Activated naive CD4-positive, alpha-beta T cell treated with anti-CD3 and anti-CD28 coated beads for 36 hours (primary cell): ENCODE measurements at regions of chr1 and their contacts with region 1.

Region 1: DNA sequence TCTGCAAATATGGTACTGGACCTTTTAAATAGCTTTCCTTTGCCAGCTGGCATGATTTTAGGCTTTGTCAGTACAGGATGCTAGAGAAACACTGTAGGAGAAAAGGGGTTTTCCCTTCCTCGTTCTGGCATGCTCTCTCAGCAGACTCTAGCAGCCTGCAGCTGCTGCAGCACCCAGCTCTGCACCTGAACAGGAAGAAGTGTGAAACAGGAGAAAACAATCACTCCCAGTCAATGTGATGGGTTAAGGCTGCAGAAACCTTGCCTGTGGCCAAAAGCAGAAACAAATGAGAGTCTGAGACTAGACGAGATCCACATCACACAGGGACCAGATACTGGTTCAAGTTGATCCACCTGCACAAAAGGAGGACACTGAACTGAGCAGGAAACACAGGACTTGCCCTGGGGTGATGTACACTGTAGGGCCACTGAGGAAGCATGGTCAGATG is 21.2 kb downstream of the OVGP1 start:
- DNase-seq: peak; percentile 70
- H3K4me3 Mint-ChIP-seq: no peak overlapping the region
- H3K27ac Mint-ChIP-seq: no peak overlapping the region
- H3K4me1 Mint-ChIP-seq: peaks cover 28% of the 10 kb centered on the region
- H3K27me3 Mint-ChIP-seq: no peaks in the 10 kb centered on the region

Region 2: GRCh38 chr1:110581682-110582145 is 824.6 kb before region 1 on chr1:
- CTCF ChIA-PET with region 1: no interaction called
- intact Hi-C with region 1: no loop called
- DNase-seq: no peak
- H3K4me3 Mint-ChIP-seq: no peak overlapping the region
- H3K27ac Mint-ChIP-seq: no peak overlapping the region
- H3K4me1 Mint-ChIP-seq: no peaks in the 10 kb centered on the region
- H3K27me3 Mint-ChIP-seq: peaks cover 4% of the 10 kb centered on the region

Region 3: DNA sequence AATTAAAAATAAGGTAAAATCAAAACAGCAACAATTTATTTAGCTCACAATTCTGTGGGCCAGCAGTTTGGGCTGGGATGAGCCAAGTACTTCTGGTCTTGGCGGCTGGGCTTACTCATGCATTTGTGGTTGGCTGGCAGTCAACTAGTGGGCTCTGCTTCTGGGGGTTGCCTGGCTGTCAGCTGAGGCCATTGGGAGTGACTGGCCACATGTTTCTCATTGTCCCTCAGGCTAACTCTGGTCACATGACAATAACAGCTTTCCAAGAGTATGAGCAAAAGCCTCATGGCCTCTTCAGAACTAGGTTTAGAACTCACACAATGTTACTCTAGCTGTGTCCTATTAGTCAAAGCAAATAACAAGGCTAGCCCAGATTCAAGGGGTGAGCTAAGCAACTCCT is 131.3 kb before region 1 on chr1:
- CTCF ChIA-PET with region 1: no interaction called
- intact Hi-C with region 1: loop called (anchors 5 kb)
- DNase-seq: peak; percentile 46
- H3K4me3 Mint-ChIP-seq: no peak overlapping the region
- H3K27ac Mint-ChIP-seq: peak overlapping the region; percentile 32
- H3K4me1 Mint-ChIP-seq: peaks cover 47% of the 10 kb centered on the region
- H3K27me3 Mint-ChIP-seq: peaks cover 22% of the 10 kb centered on the region

Region 4: GRCh38 chr1:111448918-111449702 is 42.8 kb after region 1 on chr1 and contains the starts of genes ATP5PB and WDR77:
- CTCF ChIA-PET with region 1: no interaction called
- intact Hi-C with region 1: loop called (anchors 2 kb)
- DNase-seq: peak; percentile 96
- H3K4me3 Mint-ChIP-seq: peak within 1 kb of the TSS; percentile 100
- H3K27ac Mint-ChIP-seq: peak within 1 kb of the TSS; percentile 96
- H3K4me1 Mint-ChIP-seq: peaks cover 71% of the 10 kb centered on the region
- H3K27me3 Mint-ChIP-seq: no peaks in the 10 kb centered on the region
- total RNA-seq, gene ATP5PB: 324 to 331 TPM
- total RNA-seq, gene WDR77: 43.1 to 48.8 TPM

Region 5: GRCh38 chr1:112852242-112852641 is 1445.9 kb after region 1 on chr1:
- CTCF ChIA-PET with region 1: no interaction called
- intact Hi-C with region 1: no loop called
- DNase-seq: no peak
- H3K4me3 Mint-ChIP-seq: no peak overlapping the region
- H3K27ac Mint-ChIP-seq: no peak overlapping the region
- H3K4me1 Mint-ChIP-seq: peaks cover 6% of the 10 kb centered on the region
- H3K27me3 Mint-ChIP-seq: peaks cover 51% of the 10 kb centered on the region